A673 (cell line): ENCODE measurements at regions of chr1 and their contacts with region 1.

Region 1: GRCh38 chr1:84122780-84123382 is 21.2 kb upstream of the PRKACB start:
- DNase-seq: peak; percentile 68
- H3K4me3 ChIP-seq: no peak overlapping the region
- H3K27ac ChIP-seq: no peak overlapping the region
- H3K4me1 ChIP-seq: no peaks in the 10 kb centered on the region
- H3K27me3 ChIP-seq: no peaks in the 10 kb centered on the region
- CTCF ChIP-seq: peak; percentile 78

Region 2: GRCh38 chr1:83905315-83905907 is 217.5 kb before region 1 on chr1:
- CTCF ChIA-PET with region 1: no interaction called
- POLR2A ChIA-PET with region 1: no interaction called
- intact Hi-C with region 1: loop called (anchors 5 kb)
- DNase-seq: peak; percentile 50
- H3K4me3 ChIP-seq: no peak overlapping the region
- H3K27ac ChIP-seq: no peak overlapping the region
- H3K4me1 ChIP-seq: no peaks in the 10 kb centered on the region
- H3K27me3 ChIP-seq: no peaks in the 10 kb centered on the region
- CTCF ChIP-seq: peak; percentile 67

Region 3: DNA sequence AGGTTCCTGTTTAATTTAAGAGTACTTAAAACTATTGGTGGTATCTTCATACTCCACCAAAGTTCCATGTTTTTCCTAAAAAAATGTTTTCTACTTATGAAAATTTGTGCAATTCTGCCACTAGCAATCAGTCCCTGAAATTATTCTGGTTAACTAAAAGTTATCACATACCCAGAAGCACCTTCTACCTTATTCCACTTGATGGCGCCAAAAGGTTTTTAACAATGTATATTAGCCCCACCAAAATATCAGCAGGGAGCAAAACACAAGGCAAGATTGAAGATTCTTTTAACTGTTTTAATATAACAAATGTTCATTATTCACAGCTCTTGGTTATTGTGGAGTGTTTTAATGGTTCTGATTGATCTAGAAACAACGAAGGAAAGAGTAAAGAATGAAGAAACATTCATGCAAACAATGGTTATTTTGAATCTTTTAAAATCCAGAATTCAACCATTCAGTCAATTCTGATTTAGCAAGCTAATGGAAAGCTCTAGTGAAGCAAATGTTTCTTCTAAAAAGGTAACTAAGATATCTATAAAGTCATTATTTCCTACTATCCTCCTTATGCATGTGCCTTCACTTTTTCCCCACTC is 191.1 kb before region 1 on chr1:
- CTCF ChIA-PET with region 1: interaction called, 8 read pairs
- POLR2A ChIA-PET with region 1: no interaction called
- intact Hi-C with region 1: loop called (anchors 1 kb)
- DNase-seq: peak; percentile 75
- H3K4me3 ChIP-seq: no peak overlapping the region
- H3K27ac ChIP-seq: no peak overlapping the region
- H3K4me1 ChIP-seq: peaks cover 18% of the 10 kb centered on the region
- H3K27me3 ChIP-seq: no peaks in the 10 kb centered on the region
- CTCF ChIP-seq: peak; percentile 79

Region 4: DNA sequence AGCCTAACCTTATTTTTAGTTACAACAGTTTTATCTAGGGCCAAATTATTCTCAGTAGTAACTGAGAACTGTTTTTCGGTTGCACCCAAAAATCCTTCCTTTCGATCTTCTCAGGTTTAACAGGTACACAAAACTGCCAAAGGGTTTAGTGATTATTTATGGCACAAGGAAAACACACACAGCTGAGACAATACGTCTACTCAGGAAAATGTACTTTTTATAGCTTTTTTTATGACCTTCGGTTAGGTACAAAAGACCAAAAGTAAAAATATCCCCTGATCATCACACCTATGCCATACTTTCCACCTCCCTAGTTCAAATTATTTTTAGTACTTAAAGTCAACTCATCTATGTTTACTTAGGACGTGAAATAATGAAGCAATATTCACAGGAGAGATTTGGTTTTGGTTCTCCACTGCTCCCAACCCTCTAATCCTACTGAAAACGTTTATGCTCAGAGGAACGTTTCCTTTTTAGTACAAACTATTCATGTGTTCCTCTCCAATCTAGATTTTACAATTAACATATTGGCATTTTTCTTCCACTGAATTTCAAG is 172.7 kb before region 1 on chr1:
- CTCF ChIA-PET with region 1: no interaction called
- POLR2A ChIA-PET with region 1: no interaction called
- intact Hi-C with region 1: no loop called
- DNase-seq: no peak
- H3K4me3 ChIP-seq: no peak overlapping the region
- H3K27ac ChIP-seq: no peak overlapping the region
- H3K4me1 ChIP-seq: peaks cover 9% of the 10 kb centered on the region
- H3K27me3 ChIP-seq: no peaks in the 10 kb centered on the region
- CTCF ChIP-seq: no peak

Region 5: GRCh38 chr1:83960669-83961277 is 162.1 kb before region 1 on chr1:
- CTCF ChIA-PET with region 1: no interaction called
- POLR2A ChIA-PET with region 1: no interaction called
- intact Hi-C with region 1: no loop called
- DNase-seq: no peak
- H3K4me3 ChIP-seq: no peak overlapping the region
- H3K27ac ChIP-seq: no peak overlapping the region
- H3K4me1 ChIP-seq: no peaks in the 10 kb centered on the region
- H3K27me3 ChIP-seq: no peaks in the 10 kb centered on the region
- CTCF ChIP-seq: no peak

Region 6: DNA sequence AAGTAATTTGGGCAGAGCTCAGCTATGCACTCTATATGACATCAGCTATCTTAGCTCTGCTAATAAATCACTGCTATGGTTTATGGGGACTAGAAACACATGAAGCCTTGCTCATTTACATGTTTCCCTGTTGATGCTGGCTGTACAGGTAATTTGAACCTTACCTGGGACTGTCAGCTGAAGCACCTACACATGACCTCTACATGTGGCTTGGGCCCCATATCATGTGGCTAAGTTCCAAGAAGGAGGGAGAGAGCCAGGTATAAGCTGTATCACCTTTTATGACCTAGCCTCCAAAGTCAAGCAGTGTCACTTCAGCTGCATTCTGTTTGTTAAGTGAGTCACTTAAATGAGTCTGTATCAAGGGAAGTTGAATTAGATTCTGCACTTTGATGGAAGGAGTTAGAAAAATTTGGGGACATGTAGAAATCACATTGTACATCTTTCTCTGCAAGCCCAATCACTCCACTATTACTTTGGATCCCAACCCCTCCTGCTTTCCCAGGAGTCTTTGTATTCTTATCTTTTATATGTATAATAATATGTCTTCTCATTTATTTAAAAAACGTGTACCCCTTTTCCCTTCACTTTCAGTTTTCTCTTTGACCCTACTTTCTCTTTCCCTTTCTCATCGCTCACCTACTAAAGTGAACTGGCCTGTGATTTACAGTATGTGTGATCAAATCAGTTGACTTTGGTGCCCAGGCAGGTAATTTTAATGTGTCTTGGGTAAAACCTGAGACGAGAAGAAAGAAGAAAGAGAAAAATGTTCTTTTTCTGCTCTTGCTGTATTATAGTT is 32.2 kb before region 1 on chr1:
- CTCF ChIA-PET with region 1: no interaction called
- POLR2A ChIA-PET with region 1: no interaction called
- intact Hi-C with region 1: no loop called
- DNase-seq: no peak
- H3K4me3 ChIP-seq: no peak overlapping the region
- H3K27ac ChIP-seq: no peak overlapping the region
- H3K4me1 ChIP-seq: no peaks in the 10 kb centered on the region
- H3K27me3 ChIP-seq: no peaks in the 10 kb centered on the region
- CTCF ChIP-seq: no peak

Region 7: GRCh38 chr1:85504360-85504811 is 1381.5 kb after region 1 on chr1:
- CTCF ChIA-PET with region 1: no interaction called
- POLR2A ChIA-PET with region 1: no interaction called
- intact Hi-C with region 1: no loop called
- DNase-seq: no peak
- H3K4me3 ChIP-seq: no peak overlapping the region
- H3K27ac ChIP-seq: no peak overlapping the region
- H3K4me1 ChIP-seq: no peaks in the 10 kb centered on the region
- H3K27me3 ChIP-seq: no peaks in the 10 kb centered on the region
- CTCF ChIP-seq: no peak